Left ventricle myocardium inferior (tissue), 1 donor: ENCODE measurements at regions of chr6 and their contacts with region 1.

Region 1: DNA sequence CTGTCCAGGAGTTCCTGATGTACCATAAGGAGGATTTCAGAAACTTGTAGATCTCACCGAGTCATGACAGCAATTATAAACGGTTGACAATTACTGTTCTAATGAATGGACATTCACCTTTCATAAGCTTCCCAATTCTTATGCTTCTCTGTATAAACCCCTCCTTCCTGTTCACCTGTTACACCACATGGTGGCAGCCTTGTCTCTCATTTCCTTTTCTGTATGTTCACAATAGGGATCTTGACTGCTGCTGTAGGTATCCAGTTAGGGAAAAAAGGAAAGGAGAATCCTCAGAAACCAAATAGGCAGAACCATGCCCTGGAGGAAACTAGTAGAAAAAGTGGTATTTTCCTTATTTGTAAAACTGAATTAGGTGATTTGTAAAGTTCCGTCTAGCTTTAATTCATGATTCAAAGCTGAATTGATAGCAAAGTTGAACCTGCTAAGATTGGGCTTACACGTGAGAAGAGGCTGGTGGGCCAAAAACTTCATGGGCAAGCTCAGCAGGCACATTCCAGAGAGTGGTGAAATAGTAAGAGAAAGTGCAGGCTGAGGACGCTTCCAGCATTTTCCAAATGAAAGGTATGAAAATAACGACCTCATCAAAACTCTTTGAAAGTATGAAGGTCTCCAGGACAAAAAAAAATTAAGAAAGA is 29.0 kb upstream of the TBPL1 start:
- DNase-seq: peak; percentile 25
- H3K4me3 ChIP-seq: no peak overlapping the region
- H3K27ac ChIP-seq: no peak overlapping the region
- H3K4me1 ChIP-seq: no peaks in the 10 kb centered on the region
- H3K27me3 ChIP-seq: peaks cover 36% of the 10 kb centered on the region
- CTCF ChIP-seq: peak; percentile 94

Region 2: DNA sequence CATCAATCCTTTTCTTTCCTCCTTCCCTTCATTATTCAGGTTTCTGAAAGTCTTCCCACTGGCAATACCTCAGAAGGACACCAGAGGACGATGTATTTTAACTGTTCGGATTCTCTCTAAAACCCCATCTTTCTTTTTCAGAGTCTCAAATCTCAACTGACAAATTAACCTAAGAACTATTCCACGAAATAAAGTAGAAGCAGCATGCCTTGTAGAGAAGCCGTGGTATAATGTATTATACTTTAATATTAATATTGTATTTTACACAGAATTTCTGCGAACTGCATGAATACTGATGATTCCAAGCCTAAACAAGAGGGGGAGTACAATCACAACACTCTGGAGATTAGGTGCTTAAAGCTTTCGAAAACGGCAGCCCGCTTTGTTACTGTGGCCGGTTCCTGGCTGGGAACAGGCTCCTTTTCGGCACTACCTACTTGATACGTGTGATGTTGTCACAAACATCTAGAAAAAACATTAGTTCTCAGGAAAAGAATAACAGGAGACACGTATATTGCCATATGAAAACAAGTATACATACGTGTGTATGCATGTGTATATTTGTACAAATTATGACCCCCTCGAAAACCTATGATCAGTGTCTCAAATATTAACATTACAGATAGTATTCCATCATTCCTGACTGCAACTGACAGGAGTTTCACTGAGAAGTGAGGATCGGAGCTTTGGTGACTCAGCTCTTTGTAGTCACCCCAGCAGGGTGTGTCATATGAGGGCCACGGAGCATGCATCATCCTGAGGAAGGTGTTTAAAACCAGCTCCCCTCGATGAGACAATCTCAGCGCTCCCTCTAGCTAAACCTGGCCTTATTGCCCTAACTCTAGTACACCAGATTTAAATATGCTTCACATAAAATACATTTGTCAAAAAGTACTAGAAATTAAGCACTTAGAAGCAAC is 354.8 kb before region 1 on chr6:
- intact Hi-C with region 1: loop called (anchors 5 kb)
- DNase-seq: no peak
- H3K4me3 ChIP-seq: peak overlapping the region; percentile 58
- H3K27ac ChIP-seq: peak overlapping the region; percentile 41
- H3K4me1 ChIP-seq: peaks cover 6% of the 10 kb centered on the region
- H3K27me3 ChIP-seq: no peaks in the 10 kb centered on the region
- CTCF ChIP-seq: peak; percentile 91

Region 3: GRCh38 chr6:134063966-134064445 is 139.9 kb after region 1 on chr6:
- intact Hi-C with region 1: loop called (anchors 5 kb)
- DNase-seq: peak; percentile 19
- H3K4me3 ChIP-seq: no peak overlapping the region
- H3K27ac ChIP-seq: no peak overlapping the region
- H3K4me1 ChIP-seq: peaks cover 27% of the 10 kb centered on the region
- H3K27me3 ChIP-seq: no peaks in the 10 kb centered on the region
- CTCF ChIP-seq: peak; percentile 84

Region 4: GRCh38 chr6:134098276-134098675 is 174.2 kb after region 1 on chr6:
- intact Hi-C with region 1: loop called (anchors 2 kb)
- DNase-seq: no peak
- H3K4me3 ChIP-seq: no peak overlapping the region
- H3K27ac ChIP-seq: no peak overlapping the region
- H3K4me1 ChIP-seq: no peaks in the 10 kb centered on the region
- H3K27me3 ChIP-seq: peaks cover 9% of the 10 kb centered on the region
- CTCF ChIP-seq: no peak